ENCODE measurements at regions of chr5 and their contacts with region 1.

Region 1: DNA sequence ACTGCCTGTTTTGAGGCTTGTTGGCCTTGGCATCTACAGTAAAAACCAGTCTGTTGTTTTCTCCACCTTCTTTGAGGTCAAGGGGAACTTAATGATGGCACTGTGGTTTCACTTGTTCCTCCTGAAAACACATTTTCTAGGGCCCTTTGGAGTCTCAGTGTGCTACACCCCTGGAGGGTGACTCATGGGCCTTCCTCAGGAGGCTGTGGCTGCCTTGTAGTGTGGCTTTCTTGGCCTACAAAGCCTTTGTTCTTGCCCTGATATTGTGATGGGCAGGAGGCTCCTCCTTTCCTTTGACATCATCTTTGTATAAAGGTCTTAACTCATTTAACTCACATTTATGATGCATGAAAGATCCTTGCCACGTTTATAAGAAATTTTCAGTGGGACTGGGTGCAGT is 56.3 kb upstream of the GPBP1 start:
- DNase-seq: peak; percentile 71 to 89 (median 82)
- H3K4me3 ChIP-seq: no peak overlapping the region
- H3K4me3 Mint-ChIP-seq: peak overlapping the region in 7 of 8 donors; percentile 3 to 68 (median 51)
- H3K27ac ChIP-seq: peak overlapping the region; percentile 23
- H3K27ac Mint-ChIP-seq: peak overlapping the region; percentile 83 to 98 (median 94)
- H3K4me1 ChIP-seq: peaks cover 20% of the 10 kb centered on the region
- H3K4me1 Mint-ChIP-seq: peaks cover 8 to 21% (median 16%) of the 10 kb centered on the region in 4 donors
- H3K27me3 ChIP-seq: no peaks in the 10 kb centered on the region
- H3K27me3 Mint-ChIP-seq: no peaks in the 10 kb centered on the region

Region 2: DNA sequence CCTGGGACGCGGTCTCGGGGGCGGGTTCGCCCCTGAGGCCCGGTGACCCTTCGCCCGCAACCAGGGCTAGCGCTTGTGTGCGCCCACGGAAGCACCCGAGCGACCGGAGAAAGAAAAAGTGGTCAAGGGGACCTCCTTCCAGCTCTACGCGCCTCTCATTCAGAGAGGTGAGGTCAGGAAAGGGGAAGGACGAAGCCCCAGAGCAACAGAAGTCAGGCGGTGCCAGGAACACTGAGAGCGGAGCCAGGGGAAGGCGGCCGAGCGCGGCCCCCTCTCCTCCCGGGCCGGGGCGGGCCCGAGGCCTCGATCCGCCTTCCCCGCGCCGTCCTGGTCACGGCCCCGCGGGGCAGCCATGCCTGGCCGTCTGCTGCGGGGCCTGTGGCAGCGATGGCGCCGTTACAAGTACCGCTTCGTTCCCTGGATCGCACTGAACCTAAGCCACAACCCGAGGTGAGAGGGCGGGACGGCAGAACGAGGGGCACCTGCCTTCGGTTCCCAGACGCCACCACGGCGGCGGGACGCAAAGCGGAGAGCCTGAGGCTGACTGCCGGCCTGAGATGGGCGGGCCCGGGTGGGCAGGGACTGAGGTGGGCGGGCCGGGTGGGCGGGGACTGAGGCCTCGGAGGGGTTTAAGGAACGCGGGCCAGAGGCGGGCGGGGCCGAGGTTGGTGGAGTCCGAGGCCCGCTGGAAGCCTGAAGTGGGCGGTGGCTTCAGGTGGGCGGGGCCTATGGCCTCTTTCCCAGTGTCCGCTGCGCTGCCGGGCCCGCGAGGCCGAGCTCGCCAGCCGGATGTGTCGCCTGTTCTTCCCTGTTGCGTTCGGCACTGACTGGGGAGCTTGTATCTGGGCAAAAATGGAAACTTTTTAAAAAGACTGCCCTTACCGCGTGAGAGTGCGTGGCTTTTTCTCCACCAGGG is 208.0 kb before region 1 on chr5 and contains the start of gene SETD9:
- CTCF ChIA-PET with region 1: no interaction called
- POLR2A ChIA-PET with region 1: no interaction called
- intact Hi-C with region 1: loop called (anchors 5 kb)
- DNase-seq: peak; percentile 76 to 83 (median 81)
- H3K4me3 ChIP-seq: peak within 1 kb of the TSS; percentile 88 to 97
- H3K4me3 Mint-ChIP-seq: peak within 1 kb of the TSS; percentile 89 to 98 (median 92)
- H3K27ac ChIP-seq: peak within 1 kb of the TSS; percentile 62
- H3K27ac Mint-ChIP-seq: peak within 1 kb of the TSS; percentile 65 to 95 (median 92)
- H3K4me1 ChIP-seq: peaks cover 15% of the 10 kb centered on the region
- H3K4me1 Mint-ChIP-seq: peaks cover 15 to 25% (median 17%) of the 10 kb centered on the region in 4 donors
- H3K27me3 ChIP-seq: no peaks in the 10 kb centered on the region
- H3K27me3 Mint-ChIP-seq: no peaks in the 10 kb centered on the region
- total RNA-seq, gene SETD9: 3.8 to 6.8 TPM

Region 3: GRCh38 chr5:56951946-56952691 is 165.5 kb before region 1 on chr5 and contains the start of gene MIER3:
- CTCF ChIA-PET with region 1: no interaction called
- POLR2A ChIA-PET with region 1: no interaction called
- intact Hi-C with region 1: loop called (anchors 5 kb)
- DNase-seq: peak; percentile 79 to 83 (median 80)
- H3K4me3 ChIP-seq: peak within 1 kb of the TSS; percentile 57 to 72
- H3K4me3 Mint-ChIP-seq: peak within 1 kb of the TSS; percentile 94 to 98 (median 96)
- H3K27ac ChIP-seq: peak within 1 kb of the TSS; percentile 53
- H3K27ac Mint-ChIP-seq: peak within 1 kb of the TSS; percentile 92 to 96 (median 95)
- H3K4me1 ChIP-seq: peaks cover 16% of the 10 kb centered on the region
- H3K4me1 Mint-ChIP-seq: peaks cover 14 to 25% (median 20%) of the 10 kb centered on the region in 4 donors
- H3K27me3 ChIP-seq: peaks cover 5% of the 10 kb centered on the region
- H3K27me3 Mint-ChIP-seq: peaks cover 6 to 12% of the 10 kb centered on the region in 2 donors
- total RNA-seq, gene MIER3: 27.8 to 32.8 TPM